PC-3 (cell line): ENCODE measurements at regions of chr1 and their contacts with region 1.

Region 1: GRCh38 chr1:169240449-169241237 is 127.0 kb downstream of the NME7 start:
- DNase-seq: peak; percentile 72
- ATAC-seq: peak; percentile 88
- H3K4me3 ChIP-seq: peak overlapping the region; percentile 31
- H3K27ac ChIP-seq: peak overlapping the region; percentile 73
- H3K4me1 ChIP-seq: peaks cover 19% of the 10 kb centered on the region
- H3K27me3 ChIP-seq: no peaks in the 10 kb centered on the region
- CTCF ChIP-seq: no peak

Region 2: GRCh38 chr1:168603501-168604110 is 637.0 kb before region 1 on chr1:
- CTCF ChIA-PET with region 1: no interaction called
- POLR2A ChIA-PET with region 1: interaction called, 3 read pairs
- intact Hi-C with region 1: loop called (anchors 10 kb)
- DNase-seq: peak; percentile 85
- ATAC-seq: peak; percentile 95
- H3K4me3 ChIP-seq: no peak overlapping the region
- H3K27ac ChIP-seq: no peak overlapping the region
- H3K4me1 ChIP-seq: peaks cover 8% of the 10 kb centered on the region; the same call in 1 of the 2 replicates
- H3K27me3 ChIP-seq: no peaks in the 10 kb centered on the region
- CTCF ChIP-seq: peak; percentile 97

Region 3: GRCh38 chr1:169161496-169162194 is 79.0 kb before region 1 on chr1:
- CTCF ChIA-PET with region 1: no interaction called
- POLR2A ChIA-PET with region 1: no interaction called
- intact Hi-C with region 1: loop called (anchors 2 kb)
- DNase-seq: peak; percentile 58
- ATAC-seq: peak; percentile 59
- H3K4me3 ChIP-seq: no peak overlapping the region
- H3K27ac ChIP-seq: peak overlapping the region; percentile 70
- H3K4me1 ChIP-seq: peaks cover 32% of the 10 kb centered on the region
- H3K27me3 ChIP-seq: no peaks in the 10 kb centered on the region
- CTCF ChIP-seq: no peak

Region 4: GRCh38 chr1:169207797-169208520 is 32.7 kb before region 1 on chr1:
- CTCF ChIA-PET with region 1: no interaction called
- POLR2A ChIA-PET with region 1: no interaction called
- intact Hi-C with region 1: no loop called
- DNase-seq: no peak
- ATAC-seq: no peak
- H3K4me3 ChIP-seq: no peak overlapping the region
- H3K27ac ChIP-seq: no peak overlapping the region
- H3K4me1 ChIP-seq: no peaks in the 10 kb centered on the region
- H3K27me3 ChIP-seq: no peaks in the 10 kb centered on the region
- CTCF ChIP-seq: no peak

Region 5: GRCh38 chr1:169326956-169327268 is 86.3 kb after region 1 on chr1:
- CTCF ChIA-PET with region 1: no interaction called
- POLR2A ChIA-PET with region 1: no interaction called
- intact Hi-C with region 1: loop called (anchors 10 kb)
- DNase-seq: peak; percentile 63
- ATAC-seq: peak; percentile 93
- H3K4me3 ChIP-seq: no peak overlapping the region
- H3K27ac ChIP-seq: no peak overlapping the region
- H3K4me1 ChIP-seq: peaks cover 16% of the 10 kb centered on the region
- H3K27me3 ChIP-seq: no peaks in the 10 kb centered on the region
- CTCF ChIP-seq: no peak